ENCODE measurements at regions of chr4 and their contacts with region 1.

Region 1: DNA sequence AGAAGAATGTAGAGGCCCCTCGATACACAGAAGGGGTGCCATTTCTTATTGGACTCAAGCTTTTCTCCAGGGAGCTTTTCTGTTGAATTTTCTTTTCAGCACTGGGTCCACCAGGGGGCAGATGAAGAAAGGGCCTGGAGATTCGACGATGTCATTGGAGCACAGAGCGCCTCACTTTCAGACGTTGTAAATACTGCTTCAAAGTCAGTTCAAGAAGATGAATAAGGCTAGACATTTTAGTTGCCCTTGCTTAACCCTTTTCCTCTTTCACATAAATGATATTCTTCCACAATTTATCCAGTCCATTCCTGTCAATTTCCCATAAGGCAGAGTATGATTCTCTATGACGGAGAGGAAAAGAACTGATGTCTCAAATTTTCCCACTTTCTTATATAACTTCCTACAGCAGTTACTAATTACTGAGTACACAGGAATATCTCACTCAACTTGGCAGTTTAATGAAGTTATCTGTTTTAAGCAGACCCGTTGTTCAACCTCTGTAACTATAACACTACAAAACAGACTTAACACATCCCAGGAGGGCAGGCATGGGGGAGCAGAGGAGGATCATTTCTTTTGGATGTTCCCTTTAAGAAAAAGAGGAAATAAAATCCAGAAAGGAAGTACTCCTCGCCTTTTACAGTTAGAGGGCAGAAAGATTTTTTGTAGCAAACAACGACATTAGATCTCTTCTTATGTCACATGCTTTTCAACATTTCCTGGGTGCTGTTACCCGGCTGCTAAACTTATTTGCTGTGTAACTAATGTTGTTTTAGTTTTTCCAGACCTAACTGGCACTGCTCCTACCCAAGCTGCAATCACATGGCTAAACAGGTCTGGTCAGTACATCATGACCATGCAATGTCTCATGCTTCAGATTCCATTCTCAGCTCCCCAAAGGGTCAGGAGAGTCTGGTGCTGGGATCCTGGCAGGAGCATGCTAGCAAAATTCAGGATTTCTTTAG is 12.2 kb upstream of the CENPU start:
- DNase-seq: peak; percentile 35
- ATAC-seq: peak; percentile 88
- H3K4me3 Mint-ChIP-seq: peak overlapping the region; percentile 5
- H3K27ac Mint-ChIP-seq: no peak overlapping the region
- H3K4me1 Mint-ChIP-seq: peaks cover 10% of the 10 kb centered on the region
- H3K27me3 Mint-ChIP-seq: no peaks in the 10 kb centered on the region
- CTCF ChIP-seq: no peak

Region 2: DNA sequence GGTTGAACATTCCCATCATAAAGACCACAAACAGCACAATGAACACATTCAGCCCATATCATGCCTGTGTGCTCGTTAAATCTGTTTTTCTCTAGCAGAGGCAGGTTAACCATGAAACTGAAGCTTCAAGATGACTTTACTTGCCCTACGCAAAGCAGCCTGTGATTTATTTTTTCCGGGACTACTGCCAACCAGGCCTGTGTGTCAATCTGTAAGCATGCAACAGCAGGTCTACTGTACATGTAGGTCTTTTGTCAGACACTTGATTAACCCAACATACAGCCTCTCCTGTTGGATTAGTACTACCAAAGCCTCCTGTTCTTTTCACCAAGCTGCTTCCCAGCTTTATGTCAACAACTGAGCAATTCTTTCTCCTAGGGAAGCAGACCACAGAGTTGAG is 165.2 kb after region 1 on chr4:
- CTCF ChIA-PET with region 1: interaction called, 24 read pairs
- POLR2A ChIA-PET with region 1: no interaction called
- intact Hi-C with region 1: loop called (anchors 1 kb)
- DNase-seq: no peak
- ATAC-seq: no peak
- H3K4me3 Mint-ChIP-seq: no peak overlapping the region
- H3K27ac Mint-ChIP-seq: no peak overlapping the region
- H3K4me1 Mint-ChIP-seq: peaks cover 7% of the 10 kb centered on the region
- H3K27me3 Mint-ChIP-seq: peaks cover 3% of the 10 kb centered on the region
- CTCF ChIP-seq: no peak

Region 3: GRCh38 chr4:184961660-184962059 is 215.5 kb after region 1 on chr4:
- CTCF ChIA-PET with region 1: interaction called, 6 read pairs
- POLR2A ChIA-PET with region 1: no interaction called
- intact Hi-C with region 1: loop called (anchors 5 kb)
- DNase-seq: no peak
- ATAC-seq: no peak
- H3K4me3 Mint-ChIP-seq: no peak overlapping the region
- H3K27ac Mint-ChIP-seq: no peak overlapping the region
- H3K4me1 Mint-ChIP-seq: peaks cover 5% of the 10 kb centered on the region
- H3K27me3 Mint-ChIP-seq: peaks cover 3% of the 10 kb centered on the region
- CTCF ChIP-seq: no peak

Region 4: DNA sequence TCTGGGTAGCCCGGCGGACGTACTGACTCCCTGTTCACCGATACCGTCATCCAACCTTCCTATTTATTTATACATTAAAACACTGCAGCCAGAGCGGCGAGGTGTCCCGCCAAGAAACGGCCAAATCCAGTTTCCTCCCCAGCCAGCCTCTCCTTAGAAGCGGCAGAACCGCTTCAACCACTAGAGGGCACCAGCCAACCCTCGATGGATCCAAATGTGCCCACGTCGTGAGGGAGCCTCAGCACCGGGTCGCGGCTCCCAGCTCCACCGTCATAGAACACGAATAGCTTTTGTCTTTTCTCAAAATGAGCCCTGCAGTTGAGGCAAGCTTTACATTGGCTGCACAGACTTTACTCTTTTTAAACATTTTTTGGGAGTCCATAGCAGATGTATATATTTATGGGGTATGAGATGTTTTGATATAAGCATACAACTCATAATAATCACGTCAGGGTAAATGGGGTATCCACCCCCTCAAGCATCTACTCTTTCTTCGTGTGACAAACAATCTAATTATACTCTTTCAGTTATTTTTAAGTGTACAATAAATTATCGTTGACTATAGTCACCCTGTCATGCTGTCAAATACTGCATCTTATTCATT is 259.2 kb after region 1 on chr4:
- CTCF ChIA-PET with region 1: interaction called, 15 read pairs
- POLR2A ChIA-PET with region 1: no interaction called
- intact Hi-C with region 1: loop called (anchors 1 kb)
- DNase-seq: peak; percentile 60
- ATAC-seq: peak; percentile 90
- H3K4me3 Mint-ChIP-seq: peak overlapping the region; percentile 48
- H3K27ac Mint-ChIP-seq: no peak overlapping the region
- H3K4me1 Mint-ChIP-seq: peaks cover 9% of the 10 kb centered on the region
- H3K27me3 Mint-ChIP-seq: peaks cover 51% of the 10 kb centered on the region
- CTCF ChIP-seq: peak; percentile 80

Region 5: GRCh38 chr4:185096032-185096653 is 350.0 kb after region 1 on chr4:
- CTCF ChIA-PET with region 1: interaction called, 13 read pairs
- POLR2A ChIA-PET with region 1: no interaction called
- intact Hi-C with region 1: loop called (anchors 1 kb)
- DNase-seq: no peak
- ATAC-seq: no peak
- H3K4me3 Mint-ChIP-seq: no peak overlapping the region
- H3K27ac Mint-ChIP-seq: no peak overlapping the region
- H3K4me1 Mint-ChIP-seq: no peaks in the 10 kb centered on the region
- H3K27me3 Mint-ChIP-seq: peaks cover 18% of the 10 kb centered on the region
- CTCF ChIP-seq: no peak

Region 6: DNA sequence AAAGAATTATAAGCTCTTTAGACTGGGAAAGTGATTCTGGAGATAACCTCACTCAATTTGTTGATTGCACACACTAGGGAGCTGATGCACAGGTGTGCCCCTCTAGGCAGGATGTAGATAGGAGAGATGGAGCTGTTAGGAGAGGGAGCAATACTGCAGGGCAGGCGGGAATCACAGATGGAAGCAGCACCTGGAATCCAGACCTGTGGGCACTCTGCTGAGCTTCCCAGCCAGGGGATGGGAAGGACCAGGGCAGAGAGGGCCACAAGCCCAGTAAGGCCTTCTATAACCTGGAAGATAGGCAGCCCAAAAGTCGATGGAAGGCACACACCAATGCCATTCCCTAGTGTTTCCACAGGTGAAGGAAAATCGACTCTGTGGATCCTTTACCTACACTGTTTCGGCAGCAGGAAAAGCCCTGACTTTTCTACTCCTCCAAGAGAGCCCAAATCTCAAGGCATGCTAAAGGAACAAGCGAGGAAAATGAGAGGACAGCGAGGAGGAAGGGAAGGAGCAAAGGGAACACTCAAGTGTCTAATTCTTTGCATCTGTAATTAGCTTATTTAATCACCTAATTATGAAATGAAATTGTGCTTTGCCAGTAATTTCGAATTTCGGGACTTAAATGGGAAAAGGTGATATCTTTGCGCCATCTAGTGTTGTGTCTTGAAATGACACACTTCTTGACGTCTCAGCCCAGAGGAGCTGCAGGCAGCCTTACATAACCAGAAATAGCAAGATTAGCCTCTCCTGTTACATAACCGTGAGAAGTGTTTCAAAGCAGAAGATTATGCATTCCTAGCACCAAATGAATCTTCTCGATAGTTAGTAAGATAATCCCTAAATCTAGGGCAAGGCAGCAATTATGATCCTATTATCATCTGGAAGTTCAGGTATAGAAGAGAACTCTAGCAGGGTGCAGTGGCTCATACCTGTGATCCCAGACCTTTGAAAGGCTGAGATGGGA is 1291.9 kb after region 1 on chr4:
- CTCF ChIA-PET with region 1: no interaction called
- POLR2A ChIA-PET with region 1: no interaction called
- intact Hi-C with region 1: loop called (anchors 5 kb)
- DNase-seq: no peak
- ATAC-seq: peak; percentile 60
- H3K4me3 Mint-ChIP-seq: no peak overlapping the region
- H3K27ac Mint-ChIP-seq: no peak overlapping the region
- H3K4me1 Mint-ChIP-seq: no peaks in the 10 kb centered on the region
- H3K27me3 Mint-ChIP-seq: peaks cover 28% of the 10 kb centered on the region
- CTCF ChIP-seq: peak; percentile 41

Measured in activated B cell treated with CpG ODN at 0.5 μM for 24 hours (primary cell).